Ascending aorta (tissue), 2 donors: ENCODE measurements at regions of chr19 and their contacts with region 1.

Region 1: GRCh38 chr19:3359015-3359918 is 7.1 kb upstream of the NFIC start:
- DNase-seq: peak in 1 of 2 donors; percentile 81
- H3K4me3 ChIP-seq: peak overlapping the region; percentile 83 to 99
- H3K27ac ChIP-seq: peak overlapping the region; percentile 96 to 99
- H3K4me1 ChIP-seq: peaks cover 16 to 26% of the 10 kb centered on the region in 2 donors
- H3K27me3 ChIP-seq: no peaks in the 10 kb centered on the region
- CTCF ChIP-seq: no peak

Region 2: DNA sequence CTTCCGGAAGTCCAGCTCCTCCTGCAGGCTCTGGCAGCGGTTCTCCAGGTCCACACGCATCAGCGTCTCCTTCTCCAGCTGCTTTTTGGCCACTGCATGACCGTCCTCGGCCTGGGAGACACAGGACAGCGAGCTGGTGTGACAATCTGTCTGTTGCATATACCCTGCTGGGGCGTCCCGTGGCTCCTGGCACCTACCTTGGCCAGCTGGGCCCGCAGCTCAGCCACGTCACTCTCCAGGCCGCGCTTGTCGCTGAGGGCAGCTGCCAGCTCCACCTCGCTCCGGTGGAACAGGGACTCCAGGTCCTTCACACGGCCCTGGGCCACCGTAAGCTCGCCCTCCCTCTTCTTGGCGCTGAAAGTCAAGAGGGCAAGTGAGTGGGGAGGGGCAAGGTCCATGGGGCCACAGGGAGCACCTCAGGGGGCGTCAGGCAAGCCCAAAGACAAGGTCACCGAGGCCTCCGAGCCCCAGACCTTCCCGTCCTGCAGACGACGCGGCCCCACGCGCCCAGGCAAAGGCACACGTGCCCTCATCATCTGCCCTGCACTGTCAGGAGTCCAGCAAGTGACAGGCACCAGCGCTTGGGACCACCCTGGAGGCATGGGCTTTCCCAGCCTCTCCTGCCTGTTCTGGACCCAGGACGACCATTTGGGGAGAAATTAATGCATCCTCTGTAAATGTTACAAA is 920.9 kb before region 1 on chr19:
- intact Hi-C with region 1: no loop called
- DNase-seq: no peak
- H3K4me3 ChIP-seq: no peak overlapping the region
- H3K27ac ChIP-seq: no peak overlapping the region
- H3K4me1 ChIP-seq: no peaks in the 10 kb centered on the region
- H3K27me3 ChIP-seq: no peaks in the 10 kb centered on the region
- CTCF ChIP-seq: no peak

Region 3: GRCh38 chr19:3343619-3344502 is 15.4 kb before region 1 on chr19:
- intact Hi-C with region 1: loop called (anchors 2 kb)
- DNase-seq: peak; percentile 81 to 95
- H3K4me3 ChIP-seq: peak overlapping the region; percentile 14 to 49
- H3K27ac ChIP-seq: peak overlapping the region; percentile 84 to 86
- H3K4me1 ChIP-seq: peaks cover 13 to 31% of the 10 kb centered on the region in 2 donors
- H3K27me3 ChIP-seq: no peaks in the 10 kb centered on the region
- CTCF ChIP-seq: peak in 2 of 3 experiments; percentile 12 to 34

Region 4: GRCh38 chr19:3403489-3404323 is 44.4 kb after region 1 on chr19:
- intact Hi-C with region 1: no loop called
- DNase-seq: peak; percentile 81 to 97
- H3K4me3 ChIP-seq: peak overlapping the region; percentile 60 to 65
- H3K27ac ChIP-seq: peak overlapping the region; percentile 98 to 100
- H3K4me1 ChIP-seq: peaks cover 6 to 58% of the 10 kb centered on the region in 2 donors
- H3K27me3 ChIP-seq: no peaks in the 10 kb centered on the region
- CTCF ChIP-seq: no peak